ENCODE measurements at regions of chr5 and their contacts with region 1.

Region 1: GRCh38 chr5:21919410-21920022 is 933.6 kb downstream of the CDH12 start:
- DNase-seq: peak; percentile 59
- H3K4me3 Mint-ChIP-seq: no peak overlapping the region
- H3K27ac Mint-ChIP-seq: no peak overlapping the region
- H3K4me1 Mint-ChIP-seq: peaks cover 6% of the 10 kb centered on the region
- H3K27me3 Mint-ChIP-seq: no peaks in the 10 kb centered on the region
- CTCF ChIP-seq: peak; percentile 65

Region 2: GRCh38 chr5:21784487-21784886 is 135.0 kb before region 1 on chr5:
- CTCF ChIA-PET with region 1: no interaction called
- POLR2A ChIA-PET with region 1: no interaction called
- intact Hi-C with region 1: no loop called
- DNase-seq: no peak
- H3K4me3 Mint-ChIP-seq: no peak overlapping the region
- H3K27ac Mint-ChIP-seq: no peak overlapping the region
- H3K4me1 Mint-ChIP-seq: peaks cover 4% of the 10 kb centered on the region
- H3K27me3 Mint-ChIP-seq: no peaks in the 10 kb centered on the region
- CTCF ChIP-seq: no peak

Region 3: DNA sequence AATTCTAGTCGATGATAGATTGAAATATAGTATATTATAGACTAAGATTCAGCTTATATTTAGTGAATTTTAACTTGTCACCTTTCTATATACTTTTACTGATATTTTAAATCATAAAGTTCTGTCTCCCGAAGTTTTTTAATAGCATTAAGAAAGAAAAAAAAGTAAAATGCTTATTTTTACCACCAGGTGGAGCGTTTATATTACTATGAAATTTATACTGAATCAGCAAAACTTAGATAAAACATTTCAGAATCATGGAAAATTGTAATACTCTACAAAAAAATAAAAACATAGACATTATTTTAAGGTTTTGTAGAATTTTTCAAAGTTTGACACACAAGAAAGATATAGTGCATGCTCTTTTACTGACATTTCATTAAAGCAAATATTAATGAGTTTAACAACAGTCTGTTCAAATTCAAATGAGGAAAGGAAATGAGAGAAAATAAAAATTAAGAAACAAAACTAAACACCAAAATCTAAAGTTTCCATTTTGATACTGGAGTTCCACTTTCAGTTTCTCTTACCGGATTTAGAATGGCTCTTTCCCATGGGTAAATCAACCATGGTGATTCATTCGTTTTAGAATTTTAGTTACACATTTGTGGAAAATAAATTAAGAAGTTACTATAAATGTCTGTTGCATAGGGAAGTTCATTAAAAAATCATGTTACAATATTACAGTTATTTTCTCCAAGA is 101.7 kb before region 1 on chr5:
- CTCF ChIA-PET with region 1: no interaction called
- POLR2A ChIA-PET with region 1: interaction called, 3 read pairs
- intact Hi-C with region 1: loop called (anchors 5 kb)
- DNase-seq: peak; percentile 23
- H3K4me3 Mint-ChIP-seq: no peak overlapping the region
- H3K27ac Mint-ChIP-seq: peak overlapping the region; percentile 51
- H3K4me1 Mint-ChIP-seq: peaks cover 13% of the 10 kb centered on the region
- H3K27me3 Mint-ChIP-seq: no peaks in the 10 kb centered on the region
- CTCF ChIP-seq: peak; percentile 33